ENCODE measurements at regions of chr7 and their contacts with region 1.

Region 1: DNA sequence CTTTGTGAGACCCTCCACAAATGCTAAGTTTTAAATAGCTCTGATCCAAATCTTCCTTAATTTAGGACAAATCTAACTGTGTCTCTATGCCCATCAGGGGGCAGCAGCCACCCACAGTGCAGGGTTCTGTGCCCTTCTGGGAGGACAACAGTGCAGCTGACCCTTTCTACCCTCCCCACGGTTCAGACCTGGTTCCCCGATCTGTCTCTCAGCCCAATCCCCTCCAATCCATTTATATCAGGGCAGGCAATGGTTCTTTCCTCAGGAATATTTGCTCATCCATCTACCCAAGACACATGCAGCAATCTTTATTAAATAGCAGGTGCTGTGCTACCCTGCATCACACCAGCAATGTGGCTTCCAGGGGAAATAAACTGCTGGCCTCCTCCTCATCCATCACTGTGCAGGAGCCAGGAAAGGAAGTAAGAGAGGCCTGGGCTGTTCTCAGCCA is 4.0 kb upstream of the RBM28 start:
- DNase-seq: peak in 8 of 10 donors; percentile 54 to 96 (median 74)

Region 2: GRCh38 chr7:128387216-128388144 is 39.8 kb after region 1 on chr7:
- intact Hi-C with region 1: loop called (anchors 1 kb)
- DNase-seq: peak; percentile 71 to 98 (median 88)

Region 3: DNA sequence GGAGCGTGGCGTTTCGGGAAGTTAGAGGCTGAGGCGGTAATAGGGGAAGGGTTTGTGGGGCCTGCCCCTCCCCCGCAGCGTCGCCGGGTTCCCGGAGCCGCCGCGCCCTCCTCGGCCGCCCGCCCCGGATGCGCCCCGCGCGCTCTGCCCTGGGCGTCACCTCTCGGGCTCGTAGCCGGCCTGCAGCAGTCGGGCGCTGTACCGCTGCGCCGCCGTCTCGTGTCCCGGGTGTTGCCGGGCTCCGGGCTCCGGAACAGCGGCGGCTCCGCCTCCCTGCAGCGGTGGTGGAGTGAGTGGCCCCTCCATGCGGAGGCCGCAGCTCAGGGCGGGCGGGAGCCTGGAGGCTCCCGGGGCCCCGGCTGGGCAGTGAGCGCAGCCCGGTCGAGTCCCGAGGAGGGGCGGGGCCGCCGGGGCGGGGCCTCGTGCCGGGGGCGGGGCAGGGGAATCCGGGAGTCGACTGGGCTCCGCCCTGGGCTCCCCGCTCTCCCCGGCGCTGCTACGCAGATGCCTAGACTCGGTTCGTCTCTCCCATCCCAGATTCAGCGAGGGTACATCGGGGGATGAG is 62.0 kb after region 1 on chr7 and contains the start of gene IMPDH1:
- intact Hi-C with region 1: loop called (anchors 5 kb)
- DNase-seq: peak; percentile 74 to 98 (median 85)

Measured in posterior cingulate gyrus (tissue), 11 donors.